SK-N-SH (cell line): ENCODE measurements at regions of chr7 and their contacts with region 1.

Region 1: GRCh38 chr7:18515067-18515466 is 19.5 kb downstream of the HDAC9 start:
- DNase-seq: no peak
- H3K4me3 ChIP-seq: no peak overlapping the region
- H3K27ac ChIP-seq: peak overlapping the region; percentile 60 to 83
- H3K4me1 ChIP-seq: peaks cover 20 to 25% of the 10 kb centered on the region in 2 experiments; a peak in 3 of 4 replicates
- H3K27me3 ChIP-seq: no peaks in the 10 kb centered on the region
- CTCF ChIP-seq: no peak
- EP300 ChIP-seq: peak; percentile 21 to 78; a peak in 3 of 4 replicates
- RAD21 ChIP-seq: no peak

Region 2: DNA sequence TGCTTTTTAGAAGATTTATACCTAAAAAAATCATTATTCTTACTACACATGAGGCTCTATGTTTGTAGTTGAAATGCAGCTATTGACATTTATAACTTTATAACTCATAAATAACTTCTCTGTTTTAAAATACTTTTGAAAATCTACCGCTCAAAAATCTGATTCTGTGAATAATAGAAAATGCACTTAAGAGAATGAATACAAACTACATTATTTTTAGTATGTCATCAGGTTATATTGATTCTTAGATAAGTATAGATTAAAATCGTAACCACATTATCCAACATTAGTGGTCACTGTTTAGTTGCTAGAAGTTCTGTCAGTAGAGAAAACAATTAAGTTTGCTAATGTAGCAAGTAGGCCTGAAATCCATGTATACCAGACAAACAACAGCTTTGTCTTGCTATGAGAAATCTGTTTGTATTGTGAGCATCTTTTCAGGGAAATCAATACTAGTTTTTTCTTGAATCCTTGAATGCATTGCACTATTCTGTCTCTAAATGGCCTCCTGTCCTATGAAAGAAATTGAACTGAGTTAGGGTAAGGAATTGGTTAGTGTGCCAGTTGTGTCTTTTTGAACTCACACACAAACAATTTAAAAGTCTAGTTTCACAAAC is 136.0 kb before region 1 on chr7:
- CTCF ChIA-PET with region 1: no interaction called
- POLR2A ChIA-PET with region 1: no interaction called
- DNase-seq: peak; percentile 17
- H3K4me3 ChIP-seq: no peak overlapping the region
- H3K27ac ChIP-seq: peak overlapping the region in 1 of 2 experiments; percentile 44; a peak in 2 of 4 replicates
- H3K4me1 ChIP-seq: peaks cover 0 to 14% of the 10 kb centered on the region in 2 experiments; a peak in 2 of 4 replicates
- H3K27me3 ChIP-seq: no peaks in the 10 kb centered on the region
- CTCF ChIP-seq: no peak
- EP300 ChIP-seq: no peak
- RAD21 ChIP-seq: peak; percentile 31; the same call in 1 of the 2 replicates

Region 3: GRCh38 chr7:18503126-18503866 is 11.8 kb before region 1 on chr7:
- CTCF ChIA-PET with region 1: interaction called, 34 read pairs
- POLR2A ChIA-PET with region 1: no interaction called
- DNase-seq: no peak
- H3K4me3 ChIP-seq: no peak overlapping the region
- H3K27ac ChIP-seq: no peak overlapping the region
- H3K4me1 ChIP-seq: peaks cover 36 to 40% of the 10 kb centered on the region in 2 experiments
- H3K27me3 ChIP-seq: no peaks in the 10 kb centered on the region
- CTCF ChIP-seq: no peak
- EP300 ChIP-seq: no peak
- RAD21 ChIP-seq: no peak

Region 4: DNA sequence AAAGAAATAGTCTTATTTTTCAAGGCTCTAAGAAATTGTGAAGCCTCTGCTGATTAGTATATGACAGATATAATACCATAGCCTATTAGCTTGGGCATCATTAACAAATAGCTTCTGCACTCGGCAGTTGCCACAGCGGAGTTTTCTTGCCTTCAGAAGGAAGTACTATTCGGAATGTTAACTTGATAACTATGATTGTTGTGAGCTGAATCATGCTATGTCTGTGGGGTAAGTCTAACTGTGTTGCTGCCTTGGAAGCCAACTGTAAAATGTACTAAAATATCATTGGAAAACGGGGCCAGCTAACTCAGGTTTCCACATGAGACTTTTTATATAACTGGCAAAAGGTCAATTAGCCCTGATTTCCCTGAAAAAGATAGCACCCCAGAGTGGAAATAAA is 509.2 kb after region 1 on chr7:
- CTCF ChIA-PET with region 1: no interaction called
- POLR2A ChIA-PET with region 1: no interaction called
- DNase-seq: no peak
- H3K4me3 ChIP-seq: peak overlapping the region in 1 of 2 experiments; percentile 9; a peak in 1 of 4 replicates
- H3K27ac ChIP-seq: peak overlapping the region; percentile 86 to 87
- H3K4me1 ChIP-seq: peaks cover 13 to 37% of the 10 kb centered on the region in 2 experiments
- H3K27me3 ChIP-seq: no peaks in the 10 kb centered on the region
- CTCF ChIP-seq: no peak
- EP300 ChIP-seq: peak in 1 of 2 experiments; percentile 88; a peak in 2 of 4 replicates
- RAD21 ChIP-seq: no peak